Activated T-helper 1 cell treated with anti-CD3 and anti-CD28 coated beads, Interleukin-12 subunit alpha, Interleukin-12 subunit beta, Interleukin-2, Interleukin-4 antibody, amounts not matched to agents 30 ng/mL and 10 ng/mL and 1 ng/mL, durations not matched to agents 14 hours and 24 hours and 36 hours (primary cell): ENCODE measurements at regions of chr15 and their contacts with region 1.

Region 1: GRCh38 chr15:59688841-59689625 is at the start of gene BNIP2:
- DNase-seq: peak; percentile 99
- H3K4me3 Mint-ChIP-seq: peak within 1 kb of the TSS; percentile 90
- H3K27ac Mint-ChIP-seq: peak within 1 kb of the TSS; percentile 91
- H3K4me1 Mint-ChIP-seq: peaks cover 41% of the 10 kb centered on the region
- H3K27me3 Mint-ChIP-seq: no peaks in the 10 kb centered on the region
- total RNA-seq, gene BNIP2: 63.5 and 64.6 TPM in 2 replicates

Region 2: GRCh38 chr15:58987489-58988005 is 701.5 kb before region 1 on chr15 and contains the start of gene RNF111:
- intact Hi-C with region 1: loop called (anchors 10 kb)
- DNase-seq: peak; percentile 85
- H3K4me3 Mint-ChIP-seq: peak within 1 kb of the TSS; percentile 96
- H3K27ac Mint-ChIP-seq: peak within 1 kb of the TSS; percentile 94
- H3K4me1 Mint-ChIP-seq: peaks cover 47% of the 10 kb centered on the region
- H3K27me3 Mint-ChIP-seq: peaks cover 4% of the 10 kb centered on the region
- total RNA-seq, gene RNF111: 35.3 and 38.0 TPM in 2 replicates

Region 3: DNA sequence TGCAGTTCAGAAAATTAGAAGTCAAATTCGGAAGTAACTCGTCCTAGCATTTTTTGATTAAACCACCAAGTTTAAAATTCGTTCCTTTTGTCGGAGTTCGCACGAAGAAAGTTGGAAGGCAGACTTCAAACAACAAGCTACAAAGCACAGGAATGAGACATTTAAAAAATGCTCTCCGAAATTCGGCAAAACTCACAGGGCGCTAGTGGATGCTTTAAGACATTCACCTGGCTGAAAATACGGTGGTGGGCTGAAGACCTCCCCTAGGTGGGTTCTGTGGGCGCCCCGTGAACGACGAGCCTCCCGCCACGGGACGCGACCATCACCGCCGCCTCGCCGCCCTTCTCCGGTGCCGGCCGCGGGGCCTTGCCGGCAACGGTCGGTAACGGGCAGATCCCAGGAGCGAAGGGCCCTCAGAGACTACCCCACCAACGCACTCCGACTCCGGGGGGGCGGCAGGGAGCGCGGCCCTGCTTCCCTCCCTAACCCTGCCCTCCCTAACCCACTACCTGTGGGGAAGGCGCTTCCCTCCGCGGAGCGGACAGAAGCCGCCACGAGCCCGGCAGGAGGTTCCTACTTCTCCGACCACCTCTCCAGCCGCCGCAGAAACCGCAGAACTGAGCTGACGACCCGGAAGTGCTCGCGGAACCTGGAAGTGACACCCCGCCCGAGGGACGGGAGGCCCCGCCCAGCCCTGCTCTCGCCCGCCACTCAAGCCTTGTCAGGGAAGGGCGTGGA is 32.0 kb before region 1 on chr15 and contains the start of gene GTF2A2:
- intact Hi-C with region 1: loop called (anchors 1 kb)
- DNase-seq: peak; percentile 93
- H3K4me3 Mint-ChIP-seq: no peak within 1 kb of the TSS
- H3K27ac Mint-ChIP-seq: peak within 1 kb of the TSS; percentile 79
- H3K4me1 Mint-ChIP-seq: no peaks in the 10 kb centered on the region
- H3K27me3 Mint-ChIP-seq: no peaks in the 10 kb centered on the region
- total RNA-seq, gene GTF2A2: 189 and 197 TPM in 2 replicates

Region 4: GRCh38 chr15:60179786-60180391 is 490.9 kb after region 1 on chr15:
- intact Hi-C with region 1: loop called (anchors 1 kb)
- DNase-seq: no peak
- H3K4me3 Mint-ChIP-seq: no peak overlapping the region
- H3K27ac Mint-ChIP-seq: no peak overlapping the region
- H3K4me1 Mint-ChIP-seq: no peaks in the 10 kb centered on the region
- H3K27me3 Mint-ChIP-seq: peaks cover 30% of the 10 kb centered on the region

Region 5: GRCh38 chr15:60397772-60398445 is 708.9 kb after region 1 on chr15 and contains the start of gene ANXA2:
- intact Hi-C with region 1: loop called (anchors 2 kb)
- DNase-seq: peak; percentile 80
- H3K4me3 Mint-ChIP-seq: peak within 1 kb of the TSS; percentile 97
- H3K27ac Mint-ChIP-seq: peak within 1 kb of the TSS; percentile 97
- H3K4me1 Mint-ChIP-seq: peaks cover 56% of the 10 kb centered on the region
- H3K27me3 Mint-ChIP-seq: no peaks in the 10 kb centered on the region
- total RNA-seq, gene ANXA2: 243 and 247 TPM in 2 replicates